Right ventricle myocardium inferior (tissue), 1 donor: ENCODE measurements at regions of chr5 and their contacts with region 1.

Region 1: DNA sequence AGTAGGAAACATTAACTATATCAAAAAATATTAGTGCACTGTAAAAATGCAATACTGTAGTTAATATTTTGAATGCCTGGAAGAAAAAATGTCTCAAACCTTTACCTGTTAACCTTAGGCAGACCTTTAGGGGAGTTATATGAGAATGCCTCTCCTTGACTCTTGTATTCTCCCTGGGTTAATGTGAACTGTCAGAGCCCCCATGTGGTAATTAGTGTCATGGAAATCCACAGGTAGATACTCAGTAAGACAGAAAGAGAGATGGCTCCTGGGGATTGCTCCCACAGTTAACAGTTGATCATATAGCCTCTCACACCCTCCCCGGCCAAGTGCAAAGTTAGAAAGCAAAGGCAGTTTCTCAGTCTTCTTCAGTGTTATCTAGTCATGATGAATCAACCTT is 742.8 kb downstream of the NR2F1-AS1 start:
- DNase-seq: no peak
- ATAC-seq: no peak

Region 2: DNA sequence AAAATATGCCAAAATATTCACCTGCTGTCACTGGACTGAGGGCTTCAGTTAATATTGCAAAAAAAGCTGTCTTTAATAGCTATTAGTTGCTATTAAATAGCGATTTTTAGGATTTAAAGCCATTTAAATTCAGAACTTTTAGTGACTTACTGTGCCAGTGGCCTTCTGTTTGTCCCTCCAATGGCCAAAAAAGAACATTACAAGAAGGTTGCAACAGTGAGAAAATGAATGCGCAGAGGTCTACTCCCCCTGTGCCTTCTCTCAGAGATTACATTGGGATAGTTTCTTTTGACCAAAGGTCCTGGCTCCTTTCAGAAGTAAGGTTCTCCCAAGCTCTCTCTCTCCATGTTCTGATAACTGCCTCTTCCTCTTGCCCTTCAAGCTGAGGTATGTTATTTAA is 524.9 kb before region 1 on chr5:
- intact Hi-C with region 1: loop called (anchors 10 kb)
- DNase-seq: no peak
- ATAC-seq: no peak

Region 3: DNA sequence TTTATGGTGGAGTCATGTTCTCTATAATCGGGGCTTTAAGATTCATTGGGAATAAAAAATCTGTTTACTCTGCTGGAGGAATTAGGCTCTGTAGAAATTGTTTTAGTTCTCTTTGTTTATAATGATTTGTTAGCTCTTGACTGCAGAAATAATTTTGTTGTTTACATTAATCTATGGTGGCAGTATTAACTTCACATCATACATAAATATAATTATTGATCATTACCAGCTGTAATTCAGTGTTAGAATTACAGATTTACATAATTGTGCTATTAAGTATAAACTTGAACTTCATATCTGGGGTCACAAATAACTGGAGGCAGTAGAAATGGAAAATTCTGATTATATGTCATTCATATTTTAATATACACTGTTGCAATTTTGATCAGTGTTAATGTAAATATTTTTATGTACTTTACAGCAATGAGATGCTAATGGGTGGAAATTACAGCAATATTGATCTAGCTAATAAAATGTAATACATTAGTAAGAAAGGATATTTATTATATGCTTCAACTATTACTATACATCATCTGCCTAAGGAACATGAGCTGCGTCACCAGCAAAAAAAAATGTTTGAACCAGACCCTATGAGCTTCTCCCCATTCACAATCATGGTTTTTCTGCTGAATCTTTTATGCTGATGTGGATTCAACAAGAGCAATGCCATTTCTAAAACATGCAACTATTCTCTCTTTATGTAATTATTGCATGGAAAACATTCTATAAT is 103.9 kb before region 1 on chr5:
- intact Hi-C with region 1: no loop called
- DNase-seq: no peak
- ATAC-seq: no peak